ENCODE measurements at regions of chr6 and their contacts with region 1.

Region 1: DNA sequence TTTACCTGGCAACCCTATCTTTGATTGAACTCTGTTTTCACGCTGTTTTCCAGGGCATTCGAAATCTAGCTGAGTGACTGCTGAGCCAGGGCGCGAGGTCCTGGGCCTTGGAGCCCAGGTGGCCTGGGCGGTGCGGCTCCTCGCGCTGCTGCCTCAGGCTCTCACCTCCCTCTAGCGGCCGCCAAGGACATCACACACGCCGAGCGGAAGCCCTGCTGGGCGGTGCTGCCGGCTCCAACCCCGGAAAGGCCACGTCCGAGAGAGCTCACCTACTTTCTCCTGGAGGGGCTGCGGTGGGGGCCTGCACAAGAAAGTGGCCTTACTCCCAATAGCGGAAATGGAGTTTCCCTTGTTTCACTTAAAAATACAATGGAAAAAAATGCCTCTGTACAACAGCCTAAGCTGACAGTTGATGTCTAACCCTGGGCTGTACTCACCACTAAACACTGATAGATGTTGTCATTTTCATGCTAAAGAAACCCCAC is 77.7 kb downstream of the ELOVL4 start:
- DNase-seq: peak; percentile 87
- H3K4me3 Mint-ChIP-seq: peak overlapping the region; percentile 20
- H3K27ac Mint-ChIP-seq: peak overlapping the region; percentile 5
- H3K4me1 Mint-ChIP-seq: peaks cover 7% of the 10 kb centered on the region
- H3K27me3 Mint-ChIP-seq: peaks cover 6% of the 10 kb centered on the region

Region 2: GRCh38 chr6:79672631-79673111 is 197.0 kb before region 1 on chr6:
- CTCF ChIA-PET with region 1: no interaction called
- POLR2A ChIA-PET with region 1: no interaction called
- intact Hi-C with region 1: loop called (anchors 5 kb)
- DNase-seq: no peak
- H3K4me3 Mint-ChIP-seq: no peak overlapping the region
- H3K27ac Mint-ChIP-seq: no peak overlapping the region
- H3K4me1 Mint-ChIP-seq: peaks cover 23% of the 10 kb centered on the region
- H3K27me3 Mint-ChIP-seq: no peaks in the 10 kb centered on the region

Region 3: DNA sequence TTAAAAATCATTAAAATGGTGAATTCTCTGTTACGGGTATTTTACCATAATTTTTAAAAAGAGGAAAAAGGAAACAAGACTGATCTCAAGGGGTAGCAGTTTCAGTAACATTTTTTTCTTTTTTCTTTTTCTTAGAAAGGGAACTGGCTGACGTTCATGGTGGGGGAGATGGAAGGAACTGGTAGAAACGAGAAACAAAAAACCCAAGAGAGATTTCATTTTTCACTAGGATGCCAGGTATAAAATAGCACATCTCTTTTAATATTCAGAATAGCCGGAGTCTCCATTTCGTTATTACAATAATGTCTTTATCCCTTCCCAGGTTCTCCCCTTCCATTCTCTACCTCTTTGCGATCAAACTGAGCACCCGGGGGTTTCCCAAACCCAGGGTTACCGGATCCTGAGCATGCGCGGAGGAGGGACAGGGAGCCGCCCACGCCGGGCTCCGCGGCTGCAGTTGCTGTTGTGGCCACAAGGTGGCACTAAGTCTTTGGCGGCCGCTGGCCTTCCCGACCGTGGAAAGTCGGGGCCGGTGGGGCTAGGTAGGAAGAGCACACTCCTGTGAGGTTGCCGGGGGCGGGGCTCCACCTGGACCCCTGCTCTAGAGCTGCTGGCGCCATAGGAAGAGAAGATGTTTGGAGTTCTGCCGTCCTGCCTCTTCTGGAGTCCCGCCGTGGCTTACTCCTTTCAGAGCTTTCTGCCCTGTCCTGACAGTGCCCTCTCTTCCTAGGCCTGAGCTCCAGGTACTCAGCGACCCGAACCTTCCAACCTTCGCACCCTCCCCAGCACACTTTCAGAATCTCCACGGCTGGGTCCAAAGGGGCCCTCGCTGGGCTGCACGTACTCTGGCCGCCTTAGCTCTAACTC is 91.7 kb before region 1 on chr6:
- CTCF ChIA-PET with region 1: interaction called, 34 read pairs
- POLR2A ChIA-PET with region 1: no interaction called
- intact Hi-C with region 1: loop called (anchors 1 kb)
- DNase-seq: peak; percentile 92
- H3K4me3 Mint-ChIP-seq: peak overlapping the region; percentile 62
- H3K27ac Mint-ChIP-seq: peak overlapping the region; percentile 31
- H3K4me1 Mint-ChIP-seq: peaks cover 10% of the 10 kb centered on the region
- H3K27me3 Mint-ChIP-seq: no peaks in the 10 kb centered on the region

Region 4: GRCh38 chr6:80004173-80005072 is 134.8 kb after region 1 on chr6 and contains the start of gene TTK:
- CTCF ChIA-PET with region 1: no interaction called
- POLR2A ChIA-PET with region 1: no interaction called
- intact Hi-C with region 1: loop called (anchors 5 kb)
- DNase-seq: peak; percentile 94
- H3K4me3 Mint-ChIP-seq: peak within 1 kb of the TSS; percentile 94
- H3K27ac Mint-ChIP-seq: peak within 1 kb of the TSS; percentile 86
- H3K4me1 Mint-ChIP-seq: peaks cover 28% of the 10 kb centered on the region
- H3K27me3 Mint-ChIP-seq: peaks cover 3% of the 10 kb centered on the region
- total RNA-seq, gene TTK: 37.2 to 39.4 TPM

Region 5: DNA sequence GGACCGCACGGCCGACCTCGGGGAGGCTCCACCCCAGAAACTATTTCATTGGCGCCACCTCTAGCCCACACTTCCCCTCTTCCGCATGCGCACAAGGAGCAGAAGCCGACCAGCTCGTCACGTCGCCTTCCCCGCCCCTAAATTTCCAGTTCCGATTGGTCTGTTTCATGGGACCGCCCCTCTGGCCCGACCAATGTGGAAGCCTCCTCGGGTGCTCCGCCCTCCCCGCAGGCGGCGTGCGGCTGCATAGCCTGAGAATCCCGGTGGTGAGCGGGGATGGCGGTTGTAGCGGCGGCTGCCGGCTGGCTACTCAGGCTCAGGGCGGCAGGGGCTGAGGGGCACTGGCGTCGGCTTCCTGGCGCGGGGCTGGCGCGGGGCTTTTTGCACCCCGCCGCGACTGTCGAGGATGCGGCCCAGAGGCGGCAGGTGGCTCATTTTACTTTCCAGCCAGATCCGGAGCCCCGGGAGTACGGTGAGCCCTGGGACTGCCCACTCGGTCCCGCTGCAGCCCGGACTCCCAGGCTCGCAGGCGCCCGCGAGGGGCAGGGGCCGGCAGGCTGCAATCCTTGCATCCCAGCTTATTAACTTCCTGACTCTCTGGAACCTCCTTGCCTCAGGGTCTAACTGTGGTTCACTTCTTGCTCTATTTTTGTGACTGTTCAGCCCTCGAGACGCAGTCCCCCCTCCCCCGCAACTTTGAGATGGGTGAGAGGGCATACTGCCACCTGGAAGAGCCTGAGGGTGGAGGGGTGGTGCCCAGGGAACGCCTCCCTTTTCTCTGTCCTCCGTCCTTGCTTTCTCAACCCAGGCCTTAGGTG is 237.0 kb after region 1 on chr6 and contains the start of gene BCKDHB:
- CTCF ChIA-PET with region 1: interaction called, 11 read pairs
- POLR2A ChIA-PET with region 1: no interaction called
- intact Hi-C with region 1: no loop called
- DNase-seq: peak; percentile 99
- H3K4me3 Mint-ChIP-seq: peak within 1 kb of the TSS; percentile 94
- H3K27ac Mint-ChIP-seq: peak within 1 kb of the TSS; percentile 80
- H3K4me1 Mint-ChIP-seq: peaks cover 15% of the 10 kb centered on the region
- H3K27me3 Mint-ChIP-seq: no peaks in the 10 kb centered on the region
- total RNA-seq, gene BCKDHB: 16.4 to 17.7 TPM